ENCODE measurements at regions of chr4 and their contacts with region 1.

Region 1: GRCh38 chr4:174282836-174283506 is 496 bp downstream of the FBXO8 start:
- DNase-seq: peak; percentile 79
- H3K4me3 Mint-ChIP-seq: peak overlapping the region; percentile 100
- H3K27ac Mint-ChIP-seq: peak overlapping the region; percentile 99
- H3K4me1 Mint-ChIP-seq: peaks cover 73% of the 10 kb centered on the region
- H3K27me3 Mint-ChIP-seq: no peaks in the 10 kb centered on the region

Region 2: DNA sequence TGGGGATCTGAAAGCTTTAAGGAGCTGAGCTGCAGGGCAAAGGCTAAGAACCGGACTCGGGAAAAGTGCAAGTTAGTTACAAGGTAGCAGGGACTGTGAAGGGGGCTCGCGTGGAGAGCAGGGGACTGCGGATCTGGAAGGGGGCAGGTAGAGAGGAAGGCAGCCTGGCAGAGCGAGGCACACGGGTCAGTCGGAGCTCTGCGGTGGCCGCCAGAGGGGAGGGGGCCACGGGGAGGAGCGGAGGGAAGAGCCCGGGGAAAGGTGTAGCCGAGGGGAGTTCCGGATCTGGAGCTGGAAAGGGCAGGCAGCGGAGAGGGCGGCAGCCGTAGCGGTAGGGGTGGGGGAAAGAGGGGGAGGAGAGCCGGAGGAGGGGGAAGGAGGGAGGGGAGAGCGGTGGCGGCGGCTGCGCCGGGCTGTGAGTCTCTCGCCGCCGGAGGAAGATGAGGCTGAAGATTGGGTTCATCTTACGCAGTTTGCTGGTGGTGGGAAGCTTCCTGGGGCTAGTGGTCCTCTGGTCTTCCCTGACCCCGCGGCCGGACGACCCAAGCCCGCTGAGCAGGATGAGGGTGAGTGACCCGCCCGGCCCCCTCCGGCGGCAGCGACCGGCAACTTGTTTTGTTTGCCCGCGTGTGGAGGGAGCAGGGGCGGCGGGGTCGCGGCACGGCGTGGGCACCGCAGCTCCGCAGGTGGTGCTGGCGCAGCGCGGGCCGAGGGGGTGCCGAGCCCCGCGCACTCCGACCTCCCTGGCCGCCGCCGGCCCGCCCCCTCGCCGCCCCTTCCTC is 1114.4 kb before region 1 on chr4 and contains the start of gene GALNT7:
- intact Hi-C with region 1: loop called (anchors 5 kb)
- DNase-seq: peak; percentile 45
- H3K4me3 Mint-ChIP-seq: peak within 1 kb of the TSS; percentile 90
- H3K27ac Mint-ChIP-seq: peak within 1 kb of the TSS; percentile 92
- H3K4me1 Mint-ChIP-seq: peaks cover 35% of the 10 kb centered on the region
- H3K27me3 Mint-ChIP-seq: no peaks in the 10 kb centered on the region
- total RNA-seq, gene GALNT7: 24.6 and 30.5 TPM in 2 replicates

Region 3: DNA sequence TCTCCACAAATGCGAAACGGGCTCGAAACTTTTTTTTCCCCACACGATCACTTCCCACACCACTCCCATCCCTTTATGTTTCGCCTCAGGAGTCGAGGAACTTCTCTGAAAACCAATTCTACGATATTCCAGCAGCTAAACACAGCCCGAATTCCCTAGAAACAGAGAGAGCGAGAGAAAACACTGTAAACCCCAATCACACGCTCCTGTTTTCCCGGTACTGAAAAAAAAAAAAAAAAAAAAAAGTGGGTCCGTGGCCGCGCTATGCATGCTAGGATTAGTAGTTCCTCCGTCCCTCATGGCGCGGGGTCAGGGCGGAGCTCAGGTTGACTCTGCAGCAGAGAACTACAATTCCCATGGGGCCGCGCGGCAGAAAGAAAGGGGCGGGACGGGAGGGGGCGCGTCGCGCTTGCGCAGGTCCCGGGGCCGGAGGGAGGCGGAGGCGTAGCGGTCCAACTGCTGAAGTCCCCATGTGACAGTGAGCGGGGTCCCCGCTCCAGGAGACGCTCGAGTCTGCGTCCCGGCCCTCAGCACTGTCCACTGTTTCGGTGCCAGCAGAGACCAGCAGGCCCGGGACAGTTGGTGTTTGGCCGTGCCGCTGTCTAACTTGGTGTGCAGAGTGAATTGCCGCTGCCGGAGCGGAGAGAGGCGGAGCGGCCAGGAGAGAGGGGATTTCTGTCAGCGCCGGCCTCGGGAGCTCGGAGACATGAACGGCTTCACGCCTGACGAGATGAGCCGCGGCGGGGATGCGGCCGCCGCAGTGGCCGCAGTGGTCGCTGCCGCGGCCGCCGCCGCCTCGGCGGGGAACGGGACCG is 912.3 kb before region 1 on chr4 and contains the start of gene SAP30:
- intact Hi-C with region 1: loop called (anchors 5 kb)
- DNase-seq: peak; percentile 92
- H3K4me3 Mint-ChIP-seq: peak within 1 kb of the TSS; percentile 100
- H3K27ac Mint-ChIP-seq: peak within 1 kb of the TSS; percentile 99
- H3K4me1 Mint-ChIP-seq: peaks cover 61% of the 10 kb centered on the region
- H3K27me3 Mint-ChIP-seq: no peaks in the 10 kb centered on the region
- total RNA-seq, gene SAP30: 29.3 and 30.9 TPM in 2 replicates

Region 4: DNA sequence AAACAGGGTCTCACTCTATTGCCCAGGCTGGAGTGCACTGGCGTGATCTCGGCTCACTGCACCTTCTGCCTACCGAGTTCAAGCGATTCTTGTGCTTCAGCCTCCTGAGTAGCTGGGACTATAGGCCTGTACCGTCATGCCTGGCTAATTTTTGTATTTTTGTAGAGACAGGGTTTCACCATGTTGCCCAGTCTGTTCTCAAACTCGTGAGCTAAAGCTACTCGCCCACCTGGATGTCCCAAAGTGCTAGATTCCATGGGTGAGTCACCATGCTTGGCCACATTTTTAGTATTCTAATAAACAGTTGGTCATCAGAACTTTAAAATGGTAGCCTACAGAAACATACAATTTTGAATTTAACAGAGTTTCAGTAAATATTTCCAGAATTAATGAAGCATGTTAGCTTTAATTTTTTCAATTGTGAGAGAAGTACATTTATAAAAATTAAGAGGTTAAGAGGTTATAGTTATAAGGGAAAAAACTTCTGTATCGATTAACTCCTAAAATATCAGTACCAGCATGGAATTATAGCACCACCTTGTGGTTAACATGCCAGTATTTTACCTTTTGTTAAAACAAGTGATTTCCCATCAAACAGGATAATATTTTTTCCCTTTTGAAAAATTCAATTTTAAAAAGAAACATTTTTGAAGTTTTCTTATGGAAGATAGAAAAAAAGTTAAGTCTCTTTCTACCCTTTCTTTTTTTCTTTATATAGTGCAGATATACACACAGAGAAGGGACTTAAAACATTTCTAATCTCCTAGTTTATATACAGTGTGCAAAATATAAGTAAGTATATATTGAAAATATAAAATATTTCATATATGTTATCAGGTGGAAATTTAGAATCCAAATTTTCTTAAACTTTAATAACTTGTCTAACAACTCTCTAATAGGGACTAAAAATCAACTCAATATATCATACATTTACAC is 36.1 kb after region 1 on chr4:
- intact Hi-C with region 1: loop called (anchors 2 kb)
- DNase-seq: no peak
- H3K4me3 Mint-ChIP-seq: no peak overlapping the region
- H3K27ac Mint-ChIP-seq: no peak overlapping the region
- H3K4me1 Mint-ChIP-seq: no peaks in the 10 kb centered on the region
- H3K27me3 Mint-ChIP-seq: no peaks in the 10 kb centered on the region

Region 5: DNA sequence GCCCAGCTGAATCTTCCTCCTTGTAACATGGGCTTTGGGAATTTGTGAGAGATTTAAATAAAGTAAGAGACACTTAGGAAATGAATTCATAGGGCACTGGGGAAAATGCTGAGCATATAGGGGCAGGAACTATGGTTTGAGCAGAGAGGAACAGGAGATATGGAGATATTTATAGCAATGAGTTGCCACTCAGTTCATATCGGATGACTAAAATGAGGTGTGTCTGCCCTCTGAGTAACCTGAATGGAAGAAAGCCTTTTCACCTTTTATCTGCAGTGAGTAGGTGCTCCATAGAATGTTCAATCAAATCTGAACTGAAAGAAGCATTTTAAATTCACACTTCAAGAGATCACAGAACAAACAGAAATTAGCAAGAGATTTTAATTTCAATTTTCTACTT is 106.5 kb after region 1 on chr4:
- intact Hi-C with region 1: no loop called
- DNase-seq: no peak
- H3K4me3 Mint-ChIP-seq: no peak overlapping the region
- H3K27ac Mint-ChIP-seq: no peak overlapping the region
- H3K4me1 Mint-ChIP-seq: no peaks in the 10 kb centered on the region
- H3K27me3 Mint-ChIP-seq: peaks cover 4% of the 10 kb centered on the region

Region 6: GRCh38 chr4:174450457-174451125 is 167.6 kb after region 1 on chr4:
- intact Hi-C with region 1: no loop called
- DNase-seq: no peak
- H3K4me3 Mint-ChIP-seq: no peak overlapping the region
- H3K27ac Mint-ChIP-seq: no peak overlapping the region
- H3K4me1 Mint-ChIP-seq: no peaks in the 10 kb centered on the region
- H3K27me3 Mint-ChIP-seq: no peaks in the 10 kb centered on the region

Region 7: GRCh38 chr4:174522183-174523048 is 239.4 kb after region 1 on chr4 and contains the start of gene HPGD:
- intact Hi-C with region 1: loop called (anchors 2 kb)
- DNase-seq: peak; percentile 56
- H3K4me3 Mint-ChIP-seq: peak within 1 kb of the TSS; percentile 85
- H3K27ac Mint-ChIP-seq: peak within 1 kb of the TSS; percentile 74
- H3K4me1 Mint-ChIP-seq: peaks cover 23% of the 10 kb centered on the region
- H3K27me3 Mint-ChIP-seq: peaks cover 50% of the 10 kb centered on the region
- total RNA-seq, gene HPGD: 2.6 and 3.1 TPM in 2 replicates

Region 8: GRCh38 chr4:174714393-174715211 is 431.6 kb after region 1 on chr4:
- intact Hi-C with region 1: loop called (anchors 5 kb)
- DNase-seq: no peak
- H3K4me3 Mint-ChIP-seq: no peak overlapping the region
- H3K27ac Mint-ChIP-seq: no peak overlapping the region
- H3K4me1 Mint-ChIP-seq: no peaks in the 10 kb centered on the region
- H3K27me3 Mint-ChIP-seq: peaks cover 8% of the 10 kb centered on the region